Natural killer cell (primary cell): ENCODE measurements at regions of chr1 and their contacts with region 1.

Region 1: DNA sequence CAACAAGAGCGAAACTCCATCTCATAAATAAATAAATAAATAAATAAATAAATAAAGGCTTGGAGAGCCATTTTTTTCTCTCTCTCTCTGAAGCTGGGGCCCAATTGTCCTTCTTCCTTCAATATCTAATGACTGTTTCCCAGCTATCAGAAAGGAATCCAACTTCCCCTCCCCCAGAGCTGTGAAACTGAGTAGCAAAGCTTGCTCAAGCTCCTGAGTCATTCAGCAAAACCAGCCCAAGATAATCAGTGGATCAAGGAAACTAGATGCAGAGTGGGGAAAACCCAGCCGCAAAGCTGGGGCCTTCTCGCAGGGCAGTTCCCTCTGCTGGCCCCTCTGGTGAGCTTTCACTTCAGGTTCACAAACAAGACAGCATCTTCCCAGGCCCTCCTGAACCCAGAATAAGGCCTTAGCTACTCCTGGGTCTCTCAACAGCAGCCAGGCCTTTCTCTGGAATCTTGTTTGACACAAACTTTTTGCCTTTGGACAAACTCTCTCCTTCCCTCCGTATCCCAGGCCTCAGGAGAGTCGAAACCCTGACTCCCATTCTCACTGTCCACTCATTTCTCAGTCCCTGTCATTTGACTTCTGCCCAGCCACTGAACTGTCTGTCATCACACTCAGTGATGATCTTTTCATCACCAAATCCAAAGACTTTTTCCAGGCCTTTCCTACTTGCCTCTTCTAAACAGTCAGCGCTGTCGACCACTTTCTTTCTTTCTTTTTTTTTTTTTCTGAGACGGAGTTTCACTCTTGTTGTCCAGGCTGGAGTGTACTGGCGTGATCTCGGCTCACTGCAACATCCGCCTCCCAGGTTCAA is 18.0 kb upstream of the PTP4A2 start:
- DNase-seq: peak; percentile 69 to 92
- ATAC-seq: peak; percentile 95 to 98 (median 96)
- H3K4me3 ChIP-seq: no peak overlapping the region
- H3K4me3 Mint-ChIP-seq: peak overlapping the region; percentile 51
- H3K27ac ChIP-seq: peak overlapping the region; percentile 84
- H3K27ac Mint-ChIP-seq: peak overlapping the region; percentile 71 to 95
- H3K4me1 ChIP-seq: peaks cover 59% of the 10 kb centered on the region
- H3K4me1 Mint-ChIP-seq: peaks cover 47 to 55% of the 10 kb centered on the region in 2 donors
- H3K27me3 ChIP-seq: no peaks in the 10 kb centered on the region
- H3K27me3 Mint-ChIP-seq: no peaks in the 10 kb centered on the region
- CTCF ChIP-seq: peak; percentile 40

Region 2: DNA sequence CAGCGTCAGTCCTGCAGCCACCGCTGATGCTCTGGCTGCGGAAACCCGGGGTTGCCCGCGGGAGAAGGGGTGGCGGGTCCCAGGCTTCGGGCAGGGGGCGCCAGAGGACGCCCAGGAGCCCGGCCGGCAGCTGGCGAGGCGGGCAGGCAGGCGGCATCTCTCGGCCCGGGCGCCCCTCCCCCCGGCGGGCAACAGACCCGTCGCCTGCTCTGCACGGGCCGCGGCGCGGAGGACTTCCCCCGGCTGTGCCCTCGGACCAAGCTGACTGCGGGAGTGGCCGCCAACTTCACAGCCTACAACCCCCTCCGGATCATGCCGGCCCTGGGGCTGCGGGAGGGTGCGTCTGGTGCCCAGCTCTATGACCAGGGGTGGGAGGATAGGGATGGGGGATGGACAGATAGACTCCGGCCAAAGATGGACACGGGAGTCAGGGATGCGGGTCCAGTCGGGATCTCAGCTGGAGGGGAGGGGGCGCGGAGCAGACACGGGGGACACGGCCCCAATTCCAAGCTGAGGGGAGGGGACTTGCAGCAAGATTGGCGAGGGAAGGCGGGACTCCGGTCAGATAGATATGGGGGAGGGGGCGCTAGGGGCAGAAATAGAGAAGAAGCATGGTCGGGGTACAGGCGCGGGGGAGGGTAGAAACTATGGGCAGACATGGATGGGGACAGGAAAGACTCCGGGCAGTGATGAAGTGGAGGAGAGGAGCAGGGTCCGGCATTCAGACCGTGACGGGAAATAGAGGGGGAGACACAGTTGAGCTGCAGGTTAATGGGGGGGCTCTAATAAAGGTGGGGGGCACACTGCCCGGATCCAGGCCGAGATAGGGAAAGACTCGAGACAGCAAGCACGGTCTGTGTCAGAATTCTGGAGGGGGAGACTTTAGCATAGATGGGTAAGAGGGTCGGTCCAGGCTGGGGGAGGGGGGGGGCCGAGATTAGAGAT is 193.1 kb before region 1 on chr1:
- intact Hi-C with region 1: loop called (anchors 5 kb)
- DNase-seq: peak; percentile 75 to 86
- ATAC-seq: peak; percentile 53 to 65 (median 60)
- H3K4me3 ChIP-seq: peak overlapping the region; percentile 14
- H3K4me3 Mint-ChIP-seq: peak overlapping the region; percentile 90
- H3K27ac ChIP-seq: no peak overlapping the region
- H3K27ac Mint-ChIP-seq: peak overlapping the region in 1 of 2 donors; percentile 84
- H3K4me1 ChIP-seq: peaks cover 48% of the 10 kb centered on the region
- H3K4me1 Mint-ChIP-seq: peaks cover 14 to 45% of the 10 kb centered on the region in 2 donors
- H3K27me3 ChIP-seq: peaks cover 11% of the 10 kb centered on the region
- H3K27me3 Mint-ChIP-seq: peaks cover 0 to 8% of the 10 kb centered on the region in 2 donors
- CTCF ChIP-seq: peak; percentile 66

Region 3: GRCh38 chr1:31897526-31898100 is 58.5 kb before region 1 on chr1:
- intact Hi-C with region 1: no loop called
- DNase-seq: no peak
- ATAC-seq: no peak
- H3K4me3 ChIP-seq: no peak overlapping the region
- H3K4me3 Mint-ChIP-seq: no peak overlapping the region
- H3K27ac ChIP-seq: no peak overlapping the region
- H3K27ac Mint-ChIP-seq: no peak overlapping the region
- H3K4me1 ChIP-seq: peaks cover 6% of the 10 kb centered on the region
- H3K4me1 Mint-ChIP-seq: peaks cover 36 to 41% of the 10 kb centered on the region in 2 donors
- H3K27me3 ChIP-seq: no peaks in the 10 kb centered on the region
- H3K27me3 Mint-ChIP-seq: no peaks in the 10 kb centered on the region
- CTCF ChIP-seq: no peak

Region 4: DNA sequence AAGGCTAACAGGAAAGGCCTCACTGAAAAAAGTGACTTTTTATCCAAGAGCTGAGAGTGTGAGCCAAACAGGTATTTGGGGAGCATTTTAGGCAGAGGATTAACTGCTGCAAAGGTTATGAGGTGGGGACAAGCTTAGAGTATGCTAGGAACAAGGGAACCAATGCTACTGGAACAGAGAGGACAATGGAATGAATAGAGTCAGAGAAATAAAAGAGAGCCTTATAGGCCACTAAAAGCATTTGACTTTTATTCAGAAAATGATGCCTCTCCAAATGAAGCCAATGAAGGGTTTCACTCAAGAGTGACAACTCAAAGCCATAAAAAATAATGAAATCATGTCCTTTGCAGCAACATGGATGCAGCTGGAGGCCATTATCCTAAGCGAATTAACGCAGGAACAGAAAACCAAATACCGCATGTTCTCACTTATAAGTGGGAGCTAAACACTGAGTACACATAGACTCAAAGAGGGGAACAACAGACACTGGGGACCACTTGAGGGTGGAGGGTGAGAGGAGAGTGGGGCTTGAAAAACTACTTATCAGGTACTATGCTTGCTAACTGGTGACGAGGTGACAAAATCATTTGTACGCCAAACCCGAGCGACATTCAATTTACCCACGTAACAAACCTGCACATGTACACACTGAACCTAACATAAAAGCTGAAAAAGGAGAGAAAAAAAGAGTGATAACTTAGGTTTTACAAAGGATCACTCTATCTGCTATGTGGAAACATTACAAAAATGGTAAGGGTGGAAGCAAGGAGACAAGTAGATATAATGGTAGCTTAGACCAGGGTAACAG is 29.1 kb before region 1 on chr1:
- intact Hi-C with region 1: loop called (anchors 5 kb)
- DNase-seq: peak in 1 of 2 donors; percentile 61
- ATAC-seq: peak; percentile 43 to 64 (median 48)
- H3K4me3 ChIP-seq: no peak overlapping the region
- H3K4me3 Mint-ChIP-seq: peak overlapping the region; percentile 41
- H3K27ac ChIP-seq: peak overlapping the region; percentile 45
- H3K27ac Mint-ChIP-seq: peak overlapping the region; percentile 86 to 99
- H3K4me1 ChIP-seq: peaks cover 42% of the 10 kb centered on the region
- H3K4me1 Mint-ChIP-seq: peaks cover 70 to 79% of the 10 kb centered on the region in 2 donors
- H3K27me3 ChIP-seq: no peaks in the 10 kb centered on the region
- H3K27me3 Mint-ChIP-seq: no peaks in the 10 kb centered on the region
- CTCF ChIP-seq: no peak

Region 5: GRCh38 chr1:31944205-31945089 is 11.7 kb before region 1 on chr1:
- intact Hi-C with region 1: loop called (anchors 1 kb)
- DNase-seq: peak; percentile 63 to 87
- ATAC-seq: peak; percentile 50 to 83 (median 70)
- H3K4me3 ChIP-seq: peak overlapping the region; percentile 49
- H3K4me3 Mint-ChIP-seq: peak overlapping the region; percentile 81
- H3K27ac ChIP-seq: peak overlapping the region; percentile 89
- H3K27ac Mint-ChIP-seq: peak overlapping the region; percentile 91 to 94
- H3K4me1 ChIP-seq: peaks cover 67% of the 10 kb centered on the region
- H3K4me1 Mint-ChIP-seq: peaks cover 42 to 53% of the 10 kb centered on the region in 2 donors
- H3K27me3 ChIP-seq: no peaks in the 10 kb centered on the region
- H3K27me3 Mint-ChIP-seq: no peaks in the 10 kb centered on the region
- CTCF ChIP-seq: no peak

Region 6: DNA sequence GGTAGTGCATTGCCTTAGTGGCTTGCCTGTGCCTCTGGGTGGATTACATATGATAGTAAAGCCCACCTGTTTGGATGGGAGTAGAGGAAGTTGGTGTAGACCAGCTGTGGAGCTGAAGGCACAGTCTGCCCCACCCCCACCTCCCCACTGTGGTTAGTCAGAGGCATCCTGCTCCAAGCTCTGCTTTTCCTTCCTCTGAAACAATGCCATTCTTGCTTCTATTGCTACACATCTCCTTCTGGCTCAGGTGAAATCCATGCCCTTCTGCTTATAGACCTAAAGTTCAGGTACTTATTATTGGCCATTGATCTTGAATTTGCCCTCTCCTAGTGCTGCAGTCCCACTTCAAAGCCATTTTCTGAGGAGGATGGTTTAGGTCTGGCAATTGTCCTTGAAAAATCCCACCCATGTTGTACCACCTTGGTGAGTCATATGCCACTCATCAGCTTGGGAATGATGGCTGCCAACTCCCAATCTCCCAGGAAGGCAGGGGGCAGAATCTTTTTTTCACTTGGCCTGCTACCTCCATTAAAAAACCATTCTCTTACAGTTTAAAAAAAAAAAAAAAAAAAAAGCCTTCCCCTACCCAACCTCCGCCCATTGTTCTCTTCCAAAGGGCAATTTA is 216.6 kb after region 1 on chr1:
- intact Hi-C with region 1: no loop called
- DNase-seq: no peak
- ATAC-seq: no peak
- H3K4me3 ChIP-seq: no peak overlapping the region
- H3K4me3 Mint-ChIP-seq: no peak overlapping the region
- H3K27ac ChIP-seq: no peak overlapping the region
- H3K27ac Mint-ChIP-seq: no peak overlapping the region
- H3K4me1 ChIP-seq: no peaks in the 10 kb centered on the region
- H3K4me1 Mint-ChIP-seq: peaks cover 0 to 5% of the 10 kb centered on the region in 2 donors
- H3K27me3 ChIP-seq: no peaks in the 10 kb centered on the region
- H3K27me3 Mint-ChIP-seq: no peaks in the 10 kb centered on the region
- CTCF ChIP-seq: no peak